Activated CD4-positive, alpha-beta memory T cell treated with anti-CD3 and anti-CD28 coated beads for 36 hours (primary cell): ENCODE measurements at regions of chr3 and their contacts with region 1.

Region 1: GRCh38 chr3:102290241-102290640 is 144.6 kb upstream of the ZPLD1 start:
- DNase-seq: no peak
- H3K4me3 Mint-ChIP-seq: no peak overlapping the region
- H3K27ac Mint-ChIP-seq: no peak overlapping the region
- H3K4me1 Mint-ChIP-seq: no peaks in the 10 kb centered on the region
- H3K27me3 Mint-ChIP-seq: peaks cover 5% of the 10 kb centered on the region

Region 2: GRCh38 chr3:102361101-102361500 is 70.9 kb after region 1 on chr3:
- CTCF ChIA-PET with region 1: no interaction called
- POLR2A ChIA-PET with region 1: no interaction called
- intact Hi-C with region 1: loop called (anchors 2 kb)
- DNase-seq: no peak
- H3K4me3 Mint-ChIP-seq: no peak overlapping the region
- H3K27ac Mint-ChIP-seq: no peak overlapping the region
- H3K4me1 Mint-ChIP-seq: no peaks in the 10 kb centered on the region
- H3K27me3 Mint-ChIP-seq: no peaks in the 10 kb centered on the region